Kidney (tissue), 22 donors: ENCODE measurements at regions of chr10 and their contacts with region 1.

Region 1: GRCh38 chr10:44383749-44384600 is 922 bp downstream of the CXCL12 start:
- DNase-seq: peak; percentile 66 to 82 (median 76)
- H3K4me3 ChIP-seq: peak overlapping the region; percentile 50 to 66 (median 64)
- H3K27ac ChIP-seq: peak overlapping the region; percentile 23 to 43
- H3K4me1 ChIP-seq: peaks cover 0 to 5% (median 0%) of the 10 kb centered on the region in 3 donors
- H3K27me3 ChIP-seq: no peaks in the 10 kb centered on the region
- CTCF ChIP-seq: no peak

Region 2: DNA sequence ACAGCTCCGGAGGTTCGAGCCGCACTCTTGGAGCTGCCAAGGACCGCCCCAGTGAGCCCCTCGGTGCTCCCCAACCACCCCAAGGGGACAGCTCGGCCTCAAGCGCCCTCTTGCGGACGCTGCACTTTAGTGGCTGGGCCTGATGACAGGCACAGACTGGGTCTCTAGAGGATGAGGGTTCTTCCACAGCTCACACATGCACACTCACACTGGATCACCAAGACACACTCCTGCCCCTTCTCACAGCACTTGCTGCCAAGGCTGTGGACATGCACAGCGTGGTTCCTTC is 1305.0 kb before region 1 on chr10:
- intact Hi-C with region 1: no loop called
- DNase-seq: peak in 4 of 5 donors; percentile 48 to 71 (median 57)
- H3K4me3 ChIP-seq: no peak overlapping the region
- H3K27ac ChIP-seq: no peak overlapping the region
- H3K4me1 ChIP-seq: no peaks in the 10 kb centered on the region
- H3K27me3 ChIP-seq: peaks cover 12% of the 10 kb centered on the region
- CTCF ChIP-seq: peak; percentile 21

Region 3: DNA sequence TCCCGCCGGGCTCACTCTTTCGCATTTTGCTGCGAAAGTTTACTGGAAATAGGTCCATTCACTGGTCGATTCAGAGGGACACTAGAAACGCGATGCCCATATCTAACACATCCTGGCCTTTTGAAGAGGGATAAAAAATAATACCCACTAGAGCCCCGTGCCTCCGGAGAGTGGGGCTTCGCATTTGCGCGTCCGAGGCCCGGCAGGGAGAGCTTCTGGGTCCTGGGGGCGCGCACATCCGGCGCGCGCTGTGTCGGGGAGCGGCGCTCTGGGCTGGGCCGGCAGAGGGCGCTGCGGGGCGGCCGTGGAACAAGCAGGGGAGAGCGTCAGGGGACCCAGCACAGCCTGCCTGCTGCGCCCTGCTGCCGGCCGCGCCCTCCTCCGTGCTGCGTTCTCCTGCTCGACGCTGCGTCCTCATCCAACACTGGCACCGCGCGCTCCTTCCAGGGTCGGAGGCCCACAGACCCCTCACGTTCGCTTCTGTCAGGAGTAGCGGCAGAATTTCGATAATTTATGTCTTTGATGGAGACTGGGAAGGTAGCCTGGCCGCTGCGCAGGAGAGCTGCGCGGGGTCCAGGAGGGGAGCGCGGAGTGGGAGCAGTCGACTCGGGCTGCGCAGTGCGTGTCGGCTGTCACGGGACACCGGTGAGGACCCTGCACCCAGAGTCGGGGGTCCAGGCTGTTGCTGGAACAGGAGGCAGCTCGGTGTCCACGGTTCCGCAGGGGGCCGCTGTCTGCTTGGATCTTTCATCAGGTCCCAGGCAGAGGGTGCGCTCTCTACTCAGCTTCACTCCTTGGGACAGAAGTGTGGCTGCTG is 693.8 kb before region 1 on chr10:
- intact Hi-C with region 1: loop called (anchors 5 kb)
- DNase-seq: peak; percentile 90 to 95 (median 94)
- H3K4me3 ChIP-seq: peak overlapping the region; percentile 68 to 84 (median 82)
- H3K27ac ChIP-seq: no peak overlapping the region
- H3K4me1 ChIP-seq: peaks cover 0 to 3% (median 0%) of the 10 kb centered on the region in 3 donors
- H3K27me3 ChIP-seq: no peaks in the 10 kb centered on the region
- CTCF ChIP-seq: peak; percentile 92

Region 4: DNA sequence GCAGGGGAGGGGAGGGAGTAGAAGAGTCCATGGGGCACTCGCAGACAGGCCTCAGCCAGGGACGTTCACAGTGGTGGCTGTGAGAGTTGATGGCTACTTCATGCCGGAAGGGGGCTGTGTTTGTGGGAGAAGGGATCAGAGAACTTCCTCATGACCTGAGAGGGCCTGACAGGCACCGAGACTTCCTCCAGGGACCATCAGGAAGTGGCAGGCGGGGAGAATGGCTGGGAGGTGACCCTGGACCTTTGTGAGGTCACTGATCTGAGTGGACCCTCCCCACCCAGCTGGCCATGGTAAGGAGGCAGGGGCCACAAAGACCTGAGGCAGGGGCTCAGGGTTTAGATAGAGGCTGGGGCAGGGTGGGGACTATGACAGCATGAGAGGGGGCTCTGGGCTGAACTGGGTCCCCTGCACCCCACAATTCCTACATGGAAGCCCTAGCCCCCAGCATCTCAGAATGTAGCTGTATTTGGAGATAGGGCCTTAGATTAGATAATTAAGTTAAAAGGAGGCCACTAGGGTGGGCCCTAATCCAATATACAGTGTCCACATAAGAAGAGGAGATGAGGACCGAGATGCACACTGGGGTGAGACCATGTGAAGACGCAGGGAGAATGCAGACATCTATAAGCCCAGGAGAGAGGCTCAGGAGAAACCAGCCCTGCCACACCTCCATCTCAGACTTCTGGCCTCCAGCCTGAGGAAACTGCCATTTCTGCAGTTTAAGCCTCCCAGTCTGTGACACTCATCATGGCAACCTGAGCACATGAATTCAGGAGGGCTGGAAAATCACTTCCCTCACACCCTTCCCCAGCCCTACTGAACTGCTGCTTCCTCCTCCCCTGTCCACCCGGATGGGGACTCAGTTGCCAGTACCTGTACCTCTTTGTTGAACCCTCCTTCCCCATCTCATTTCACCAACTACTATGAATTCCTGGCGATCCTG is 461.4 kb before region 1 on chr10:
- intact Hi-C with region 1: no loop called
- DNase-seq: peak in 1 of 5 donors; percentile 58
- H3K4me3 ChIP-seq: no peak overlapping the region
- H3K27ac ChIP-seq: no peak overlapping the region
- H3K4me1 ChIP-seq: no peaks in the 10 kb centered on the region
- H3K27me3 ChIP-seq: no peaks in the 10 kb centered on the region
- CTCF ChIP-seq: no peak

Region 5: GRCh38 chr10:44569193-44570091 is 185.5 kb after region 1 on chr10:
- intact Hi-C with region 1: no loop called
- DNase-seq: peak in 1 of 5 donors; percentile 83
- H3K4me3 ChIP-seq: no peak overlapping the region
- H3K27ac ChIP-seq: no peak overlapping the region
- H3K4me1 ChIP-seq: no peaks in the 10 kb centered on the region
- H3K27me3 ChIP-seq: no peaks in the 10 kb centered on the region
- CTCF ChIP-seq: no peak